Ascending aorta (tissue), 2 donors: ENCODE measurements at regions of chr1 and their contacts with region 1.

Region 1: GRCh38 chr1:92975551-92976232 is 14.4 kb upstream of the DIPK1A start:
- DNase-seq: no peak
- H3K4me3 ChIP-seq: no peak overlapping the region
- H3K27ac ChIP-seq: no peak overlapping the region
- H3K4me1 ChIP-seq: peaks cover 0 to 5% of the 10 kb centered on the region in 2 donors
- H3K27me3 ChIP-seq: no peaks in the 10 kb centered on the region
- CTCF ChIP-seq: no peak

Region 2: DNA sequence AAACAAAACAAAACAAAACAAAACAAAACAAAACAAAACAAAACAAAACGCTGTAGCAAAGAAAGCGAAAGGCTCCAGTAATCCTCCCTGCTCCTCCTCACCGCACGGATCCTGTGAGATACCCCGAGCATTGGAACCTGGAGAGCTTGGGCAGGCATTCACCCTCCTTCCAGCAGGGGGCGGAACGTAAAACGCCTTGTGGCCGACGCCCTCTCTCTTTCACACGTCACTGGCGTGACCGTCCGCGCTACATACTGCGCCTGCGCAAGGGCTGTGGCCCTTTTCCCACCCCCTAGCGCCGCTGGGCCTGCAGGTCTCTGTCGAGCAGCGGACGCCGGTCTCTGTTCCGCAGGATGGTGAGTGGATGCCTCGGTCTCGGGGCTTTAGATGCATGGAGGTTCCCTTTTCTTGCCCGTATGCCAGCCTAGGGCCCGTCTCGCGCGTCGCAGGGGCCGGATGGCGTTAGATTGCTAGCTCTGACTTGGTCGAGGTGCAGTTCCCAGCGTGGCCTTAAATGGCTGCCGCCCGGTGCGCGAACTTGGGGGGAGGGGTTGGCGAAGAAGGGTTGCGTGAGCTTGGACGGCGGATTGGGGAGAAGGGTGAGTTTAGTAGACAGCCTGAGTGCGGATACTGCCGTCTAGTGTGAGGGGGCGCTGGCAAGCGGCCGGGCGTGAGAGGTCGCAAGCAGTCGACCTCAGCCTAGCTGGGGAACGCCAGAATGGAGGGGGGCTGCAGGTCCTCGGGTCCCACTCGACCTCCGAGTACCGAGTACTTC is 143.7 kb before region 1 on chr1 and contains the start of gene RPL5:
- intact Hi-C with region 1: no loop called
- DNase-seq: peak; percentile 81 to 98
- H3K4me3 ChIP-seq: peak within 1 kb of the TSS; percentile 80
- H3K27ac ChIP-seq: peak within 1 kb of the TSS; percentile 85 to 90
- H3K4me1 ChIP-seq: peaks cover 12 to 16% of the 10 kb centered on the region in 2 donors
- H3K27me3 ChIP-seq: no peaks in the 10 kb centered on the region
- CTCF ChIP-seq: peak; percentile 74 to 95 (median 92)
- total RNA-seq, gene RPL5: 617 TPM

Region 3: DNA sequence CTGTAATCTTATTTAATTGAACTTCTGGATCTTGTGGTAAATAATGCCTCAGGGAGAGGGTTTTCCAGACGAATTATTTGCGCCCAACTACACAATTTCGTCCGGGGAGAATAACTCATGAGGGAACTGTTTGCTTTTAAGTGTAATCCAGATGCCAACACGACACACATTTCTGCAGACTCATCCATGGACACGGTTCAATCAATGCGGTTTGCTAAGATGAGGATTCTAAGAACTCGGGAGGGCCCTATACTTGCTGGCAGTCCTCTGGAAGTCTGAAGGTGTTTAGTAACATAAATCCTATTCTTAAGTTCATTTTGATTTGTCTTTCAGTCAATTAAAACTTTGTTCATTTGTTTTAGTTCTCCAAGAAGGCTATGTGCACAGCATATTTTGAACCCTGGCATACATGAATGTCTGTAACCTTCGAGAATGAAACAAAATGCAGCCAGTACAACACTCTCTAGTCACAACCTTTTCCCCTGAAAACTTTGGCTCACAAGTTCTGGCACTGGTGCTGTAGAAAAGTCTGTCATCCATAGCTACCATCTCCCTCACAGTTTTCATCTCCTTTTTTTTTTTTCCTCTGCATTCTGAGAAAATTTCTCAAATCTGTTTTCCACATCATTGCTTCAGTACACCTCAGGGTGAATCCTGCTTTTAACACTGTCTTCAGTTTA is 53.2 kb before region 1 on chr1:
- intact Hi-C with region 1: no loop called
- DNase-seq: no peak
- H3K4me3 ChIP-seq: no peak overlapping the region
- H3K27ac ChIP-seq: no peak overlapping the region
- H3K4me1 ChIP-seq: no peaks in the 10 kb centered on the region
- H3K27me3 ChIP-seq: no peaks in the 10 kb centered on the region
- CTCF ChIP-seq: no peak

Region 4: DNA sequence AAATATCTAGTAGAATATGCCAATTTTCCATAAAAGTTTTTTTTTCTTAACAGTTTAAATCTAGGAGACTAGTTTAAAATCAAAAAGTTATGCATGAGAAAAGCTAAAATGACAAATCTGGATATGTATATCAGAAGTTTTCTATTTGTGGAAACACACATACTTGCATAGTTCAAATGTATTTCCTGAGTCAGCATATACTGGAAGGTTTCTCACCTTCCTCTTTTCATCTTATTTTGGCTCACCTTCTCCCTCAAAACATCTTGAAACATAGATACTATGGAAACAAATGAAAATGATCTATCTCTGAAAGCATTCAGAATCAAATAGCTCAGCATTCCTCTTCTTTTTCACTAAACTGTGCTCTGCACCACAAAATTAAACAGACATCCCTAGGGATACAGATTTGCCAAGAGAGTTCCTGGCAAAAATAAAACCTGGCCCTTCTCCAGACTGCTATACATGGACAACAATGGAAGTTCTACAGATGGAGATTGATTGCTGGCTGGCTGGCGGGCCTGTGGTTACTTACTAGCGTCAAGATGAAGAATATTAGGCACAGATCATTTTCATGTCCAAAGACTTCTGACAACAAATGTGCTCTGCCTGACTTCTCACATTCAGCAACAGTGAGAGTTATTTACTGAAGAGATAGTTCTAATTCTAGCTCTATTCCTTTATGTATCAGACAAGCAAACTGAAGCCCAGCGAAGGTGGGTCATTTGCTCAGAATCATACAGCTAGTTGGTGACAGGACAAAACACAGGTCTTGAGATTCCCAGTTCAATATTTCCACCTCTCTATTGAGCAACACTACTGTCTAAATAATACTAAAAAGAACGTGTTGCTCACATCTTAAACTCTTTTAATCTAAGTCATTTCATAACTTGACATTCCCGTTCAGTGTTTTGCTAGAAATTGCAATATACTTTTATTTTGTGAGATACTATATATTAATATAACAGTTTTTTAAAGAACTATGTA is 41.0 kb before region 1 on chr1:
- intact Hi-C with region 1: loop called (anchors 5 kb)
- DNase-seq: peak in 1 of 2 donors; percentile 71
- H3K4me3 ChIP-seq: peak overlapping the region in 1 of 2 donors; percentile 18
- H3K27ac ChIP-seq: peak overlapping the region; percentile 46 to 48
- H3K4me1 ChIP-seq: peaks cover 3 to 40% of the 10 kb centered on the region in 2 donors
- H3K27me3 ChIP-seq: no peaks in the 10 kb centered on the region
- CTCF ChIP-seq: no peak

Region 5: DNA sequence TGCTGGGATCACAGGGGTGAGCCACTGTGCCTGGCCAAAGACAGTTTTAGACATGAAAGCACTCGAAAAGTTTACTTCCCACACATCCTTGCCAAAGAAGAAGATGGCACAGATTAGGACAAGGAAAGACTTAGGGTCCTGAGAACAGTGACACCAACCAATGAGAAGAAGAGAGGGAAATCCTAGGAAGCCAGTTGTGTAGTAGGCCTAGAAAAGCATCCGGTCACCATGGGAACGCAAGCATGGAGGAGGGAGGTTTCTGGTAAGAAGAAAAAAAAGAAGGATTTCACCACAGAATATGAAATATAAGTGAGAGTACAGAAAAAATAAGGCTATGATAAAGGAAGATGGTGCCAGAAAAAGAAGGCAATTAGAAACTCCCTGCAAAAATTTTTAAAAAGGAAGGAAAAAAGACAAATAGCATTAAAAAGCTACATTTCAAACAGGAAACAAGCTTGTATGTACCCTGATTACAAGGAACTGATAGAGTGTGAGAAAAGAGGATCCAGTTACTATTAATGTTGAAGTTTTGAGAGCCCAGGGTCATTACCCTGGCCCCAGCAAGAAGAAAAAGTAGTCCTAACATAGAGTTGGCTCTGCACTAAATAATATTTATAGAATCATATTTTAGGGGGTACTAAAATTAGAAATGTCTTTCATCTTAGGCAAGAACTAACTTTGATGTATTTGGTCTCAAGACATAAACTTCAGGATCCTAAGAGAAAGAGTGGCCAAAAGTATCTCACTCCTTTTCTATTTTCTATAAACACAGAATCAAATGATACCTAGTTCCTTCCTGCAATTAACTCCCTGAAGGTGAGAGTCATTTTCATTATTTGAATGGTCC is 30.6 kb before region 1 on chr1:
- intact Hi-C with region 1: no loop called
- DNase-seq: no peak
- H3K4me3 ChIP-seq: no peak overlapping the region
- H3K27ac ChIP-seq: peak overlapping the region; percentile 54 to 79
- H3K4me1 ChIP-seq: peaks cover 0 to 34% of the 10 kb centered on the region in 2 donors
- H3K27me3 ChIP-seq: no peaks in the 10 kb centered on the region
- CTCF ChIP-seq: no peak

Region 6: DNA sequence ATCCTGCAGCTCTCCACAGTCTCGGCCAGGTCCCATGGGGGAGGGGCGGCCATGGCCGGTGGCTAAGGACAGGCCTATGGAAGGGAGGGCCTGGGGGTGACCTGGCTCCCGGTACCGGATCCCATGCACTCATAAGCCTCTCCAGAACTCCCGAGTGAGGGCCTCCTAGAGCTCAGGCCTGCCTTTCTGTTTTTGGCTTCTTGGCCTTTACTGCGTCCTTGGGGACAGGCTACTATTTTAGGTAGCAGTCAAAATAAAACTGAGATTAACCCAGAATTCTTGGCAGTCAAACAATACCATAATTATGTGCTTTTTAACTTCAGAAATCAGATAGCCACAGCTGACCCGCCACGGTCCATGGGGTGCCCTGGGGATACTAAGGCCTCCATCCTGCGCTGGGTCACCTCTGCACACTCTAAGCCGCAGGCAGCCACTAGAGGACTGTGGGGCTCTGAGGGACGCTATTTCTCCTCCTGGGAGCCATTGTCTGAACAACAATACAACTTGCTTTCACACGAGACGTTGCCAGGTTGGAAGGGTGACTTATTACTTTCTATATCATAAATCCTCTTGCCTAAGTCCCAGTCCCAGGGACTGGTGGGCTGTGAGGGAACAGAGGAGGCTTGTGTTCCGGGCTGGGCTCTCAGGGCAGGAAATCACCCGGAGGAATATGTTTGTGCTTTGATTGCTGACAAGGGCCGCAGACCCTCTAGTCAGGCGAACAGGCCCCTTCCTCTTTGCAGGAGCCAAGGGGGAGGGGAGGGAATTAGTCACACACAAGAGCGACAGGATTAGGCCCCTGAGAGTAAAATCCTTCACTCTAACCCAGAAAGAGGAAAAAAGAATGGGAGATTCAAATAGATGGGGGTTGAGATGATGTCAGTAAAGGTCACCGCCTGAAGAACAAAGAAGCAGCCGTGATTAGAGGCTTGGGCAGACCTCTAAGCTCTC is 746.7 kb after region 1 on chr1:
- intact Hi-C with region 1: no loop called
- DNase-seq: peak in 1 of 2 donors; percentile 70
- H3K4me3 ChIP-seq: no peak overlapping the region
- H3K27ac ChIP-seq: peak overlapping the region; percentile 59 to 70
- H3K4me1 ChIP-seq: peaks cover 17 to 24% of the 10 kb centered on the region in 2 donors
- H3K27me3 ChIP-seq: no peaks in the 10 kb centered on the region
- CTCF ChIP-seq: no peak